Activated CD4-positive, alpha-beta memory T cell treated with anti-CD3 and anti-CD28 coated beads for 36 hours (primary cell): ENCODE measurements at regions of chr4 and their contacts with region 1.

Region 1: DNA sequence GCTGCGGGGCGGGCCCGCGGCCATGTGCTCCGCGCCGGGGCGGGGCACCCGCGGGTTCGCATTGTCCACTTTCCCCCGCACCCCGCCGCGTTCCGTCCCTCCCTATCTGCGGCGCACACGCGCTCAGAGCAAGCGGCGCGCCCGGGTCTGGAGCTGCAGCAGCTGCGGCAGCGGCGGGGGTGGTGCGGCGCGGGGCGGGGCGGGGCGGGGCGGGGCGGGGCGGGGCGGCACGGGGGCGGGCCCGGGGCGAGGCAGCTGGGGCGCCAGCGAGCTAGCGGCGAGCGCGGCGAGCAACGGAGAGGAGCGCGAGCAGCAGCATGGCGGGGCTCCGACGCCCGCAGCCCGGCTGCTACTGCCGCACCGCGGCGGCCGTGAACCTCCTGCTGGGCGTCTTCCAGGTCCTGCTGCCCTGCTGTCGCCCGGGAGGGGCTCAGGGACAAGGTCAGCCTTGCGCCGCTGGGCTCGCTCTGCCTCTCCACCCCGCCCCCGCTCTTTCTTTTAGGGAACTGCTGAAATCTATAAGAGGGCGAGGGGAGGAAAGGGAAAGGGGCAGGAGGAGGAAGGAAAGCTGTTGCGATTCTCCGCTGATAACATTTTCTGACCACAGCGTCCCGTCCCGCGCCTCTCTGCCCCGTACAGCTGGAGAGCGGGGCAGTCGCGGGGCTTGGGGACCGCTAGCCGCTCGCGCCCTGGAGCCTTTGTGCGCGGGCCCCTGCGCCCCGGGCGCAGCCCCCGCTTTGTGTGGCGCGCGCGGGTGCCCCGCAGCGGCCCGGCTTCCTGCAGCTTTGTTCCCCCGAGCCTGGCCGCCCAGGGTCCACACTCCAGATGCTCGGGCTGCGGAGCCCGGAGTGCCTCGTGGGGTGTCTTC is at the start of gene TMEM131L:
- DNase-seq: peak; percentile 78
- H3K4me3 Mint-ChIP-seq: peak within 1 kb of the TSS; percentile 93
- H3K27ac Mint-ChIP-seq: peak within 1 kb of the TSS; percentile 88
- H3K4me1 Mint-ChIP-seq: peaks cover 47% of the 10 kb centered on the region
- H3K27me3 Mint-ChIP-seq: peaks cover 1% of the 10 kb centered on the region
- total RNA-seq, gene TMEM131L: 32.7 to 33.3 TPM

Region 2: GRCh38 chr4:153344131-153345010 is 121.9 kb before region 1 on chr4 and contains the start of gene MND1:
- CTCF ChIA-PET with region 1: interaction called, 9 read pairs
- POLR2A ChIA-PET with region 1: interaction called, 3 read pairs
- intact Hi-C with region 1: loop called (anchors 2 kb)
- DNase-seq: peak; percentile 95
- H3K4me3 Mint-ChIP-seq: peak within 1 kb of the TSS; percentile 93
- H3K27ac Mint-ChIP-seq: peak within 1 kb of the TSS; percentile 86
- H3K4me1 Mint-ChIP-seq: peaks cover 26% of the 10 kb centered on the region
- H3K27me3 Mint-ChIP-seq: no peaks in the 10 kb centered on the region
- total RNA-seq, gene MND1: 32.0 to 36.1 TPM

Region 3: GRCh38 chr4:153450544-153450917 is 15.8 kb before region 1 on chr4:
- CTCF ChIA-PET with region 1: interaction called, 6 read pairs
- POLR2A ChIA-PET with region 1: interaction called, 3 read pairs
- intact Hi-C with region 1: loop called (anchors 1 kb)
- DNase-seq: peak; percentile 48
- H3K4me3 Mint-ChIP-seq: peak overlapping the region; percentile 18
- H3K27ac Mint-ChIP-seq: peak overlapping the region; percentile 76
- H3K4me1 Mint-ChIP-seq: peaks cover 12% of the 10 kb centered on the region
- H3K27me3 Mint-ChIP-seq: no peaks in the 10 kb centered on the region

Region 4: GRCh38 chr4:153497988-153498967 is 32.0 kb after region 1 on chr4:
- CTCF ChIA-PET with region 1: interaction called, 19 read pairs
- POLR2A ChIA-PET with region 1: interaction called, 14 read pairs
- intact Hi-C with region 1: loop called (anchors 1 kb)
- DNase-seq: no peak
- H3K4me3 Mint-ChIP-seq: peak overlapping the region; percentile 67
- H3K27ac Mint-ChIP-seq: peak overlapping the region; percentile 98
- H3K4me1 Mint-ChIP-seq: peaks cover 94% of the 10 kb centered on the region
- H3K27me3 Mint-ChIP-seq: no peaks in the 10 kb centered on the region

Region 5: DNA sequence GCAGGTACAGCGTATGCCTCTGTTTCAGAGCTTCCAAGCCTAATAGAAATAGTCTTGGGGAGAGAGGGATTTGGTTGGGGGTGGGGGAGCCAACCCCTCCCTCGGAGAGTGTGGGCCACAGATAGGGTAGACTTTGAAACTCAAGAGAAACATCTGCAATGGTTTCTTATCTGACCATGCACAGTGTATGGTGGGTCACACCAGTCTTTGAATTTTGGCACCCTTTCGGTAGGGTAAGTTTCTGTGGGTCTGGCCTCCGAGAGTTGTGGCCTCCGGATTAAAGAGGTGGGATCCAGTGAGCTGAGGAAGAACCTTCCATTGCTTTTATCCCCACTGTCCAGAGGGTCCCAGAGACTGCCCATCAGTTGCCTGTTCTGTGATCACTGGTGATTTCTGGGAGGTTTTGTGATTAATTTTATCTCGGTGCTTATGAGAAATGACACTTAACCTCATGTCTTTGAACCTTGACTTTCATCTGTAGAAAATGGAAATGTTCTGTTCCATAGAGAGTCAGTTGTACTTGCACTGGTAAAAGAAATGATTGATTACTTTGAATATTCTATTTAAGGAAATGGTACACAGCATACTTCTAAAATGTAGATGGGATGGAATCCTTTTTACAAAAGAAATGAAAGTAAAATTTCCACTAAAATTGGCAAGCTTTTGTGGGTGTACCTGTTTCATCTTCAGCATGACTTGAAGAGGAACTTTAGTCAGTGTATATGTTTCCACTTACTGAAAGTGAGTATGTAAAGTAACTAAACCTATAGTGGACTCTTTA is 62.6 kb after region 1 on chr4:
- CTCF ChIA-PET with region 1: interaction called, 19 read pairs
- POLR2A ChIA-PET with region 1: interaction called, 7 read pairs
- intact Hi-C with region 1: loop called (anchors 1 kb)
- DNase-seq: peak; percentile 30
- H3K4me3 Mint-ChIP-seq: peak overlapping the region; percentile 66
- H3K27ac Mint-ChIP-seq: peak overlapping the region; percentile 93
- H3K4me1 Mint-ChIP-seq: peaks cover 86% of the 10 kb centered on the region
- H3K27me3 Mint-ChIP-seq: no peaks in the 10 kb centered on the region

Region 6: GRCh38 chr4:153541456-153542096 is 75.3 kb after region 1 on chr4:
- CTCF ChIA-PET with region 1: interaction called, 13 read pairs
- POLR2A ChIA-PET with region 1: interaction called, 15 read pairs
- intact Hi-C with region 1: no loop called
- DNase-seq: peak; percentile 68
- H3K4me3 Mint-ChIP-seq: no peak overlapping the region
- H3K27ac Mint-ChIP-seq: peak overlapping the region; percentile 13
- H3K4me1 Mint-ChIP-seq: peaks cover 64% of the 10 kb centered on the region
- H3K27me3 Mint-ChIP-seq: no peaks in the 10 kb centered on the region